Heart right ventricle (tissue), 16 donors: ENCODE measurements at regions of chrX and their contacts with region 1.

Region 1: GRCh38 chrX:104195489-104196084 is 29.3 kb downstream of the FAM199X start:
- DNase-seq: no peak
- ATAC-seq: no peak
- H3K4me3 ChIP-seq: no peak overlapping the region
- H3K27ac ChIP-seq: no peak overlapping the region
- H3K4me1 ChIP-seq: peaks cover 0 to 5% (median 0%) of the 10 kb centered on the region in 9 donors
- H3K27me3 ChIP-seq: peaks cover 0 to 39% (median 0%) of the 10 kb centered on the region in 7 donors
- CTCF ChIP-seq: peak; percentile 37 to 84 (median 68)

Region 2: DNA sequence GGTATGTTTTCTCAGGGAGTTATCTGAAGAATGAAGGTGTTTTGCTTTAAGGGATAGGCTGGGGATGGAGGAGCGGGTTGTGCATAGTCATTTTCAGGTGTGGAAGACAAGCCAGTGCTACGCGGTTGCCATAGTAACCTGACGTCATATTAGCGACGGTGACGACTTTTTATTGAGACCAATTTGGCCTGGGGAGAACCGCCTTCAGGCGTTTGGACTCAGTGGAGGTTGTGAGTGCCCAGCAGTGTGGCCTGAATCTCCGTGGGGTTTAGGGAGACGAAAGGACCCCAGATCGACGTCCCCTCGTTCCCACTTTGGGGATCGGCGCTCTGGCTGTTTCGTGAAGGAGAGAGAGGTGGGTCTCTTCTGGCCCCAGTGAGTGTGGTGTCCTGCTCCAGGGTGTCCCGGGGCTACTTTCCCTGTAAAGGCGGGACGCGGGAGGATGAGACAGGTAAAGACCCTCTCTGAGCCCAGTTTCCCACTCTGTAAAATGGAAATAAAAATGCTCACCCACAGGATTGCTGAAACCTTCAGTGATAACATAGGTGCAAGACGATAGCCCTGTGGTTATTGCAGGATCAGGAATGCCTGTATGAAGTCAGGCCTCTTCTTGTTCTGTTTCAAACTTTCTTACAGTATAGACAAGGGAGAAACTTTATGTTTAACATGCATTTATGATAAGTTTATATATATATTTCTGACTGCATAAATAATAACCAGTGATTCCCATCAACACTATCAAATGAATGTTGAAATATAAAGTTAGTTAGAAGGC is 1426.4 kb before region 1 on chrX:
- intact Hi-C with region 1: no loop called
- DNase-seq: peak; percentile 24 to 80
- ATAC-seq: peak; percentile 87 to 96 (median 92)
- H3K4me3 ChIP-seq: peak overlapping the region; percentile 39 to 72 (median 62)
- H3K27ac ChIP-seq: peak overlapping the region in 5 of 10 donors; percentile 23 to 77 (median 48)
- H3K4me1 ChIP-seq: peaks cover 0 to 13% (median 8%) of the 10 kb centered on the region in 9 donors
- H3K27me3 ChIP-seq: no peaks in the 10 kb centered on the region
- CTCF ChIP-seq: no peak

Region 3: GRCh38 chrX:104270920-104271512 is 75.4 kb after region 1 on chrX:
- intact Hi-C with region 1: loop called in 5 of 10 experiments (anchors 2 to 10 kb)
- DNase-seq: peak; percentile 23 to 39
- ATAC-seq: peak in 6 of 8 donors; percentile 46 to 89 (median 74)
- H3K4me3 ChIP-seq: peak overlapping the region in 7 of 10 donors; percentile 10 to 39 (median 27)
- H3K27ac ChIP-seq: no peak overlapping the region
- H3K4me1 ChIP-seq: peaks cover 0 to 5% (median 0%) of the 10 kb centered on the region in 9 donors
- H3K27me3 ChIP-seq: peaks cover 0 to 75% (median 0%) of the 10 kb centered on the region in 7 donors
- CTCF ChIP-seq: peak; percentile 6 to 69 (median 57)

Region 4: GRCh38 chrX:104285201-104285600 is 89.6 kb after region 1 on chrX:
- intact Hi-C with region 1: no loop called
- DNase-seq: no peak
- ATAC-seq: no peak
- H3K4me3 ChIP-seq: no peak overlapping the region
- H3K27ac ChIP-seq: no peak overlapping the region
- H3K4me1 ChIP-seq: no peaks in the 10 kb centered on the region
- H3K27me3 ChIP-seq: peaks cover 0 to 63% (median 0%) of the 10 kb centered on the region in 7 donors
- CTCF ChIP-seq: no peak

Region 5: GRCh38 chrX:104343428-104344129 is 148.0 kb after region 1 on chrX:
- intact Hi-C with region 1: loop called in 3 of 10 experiments (anchors 5 to 10 kb)
- DNase-seq: peak in 1 of 2 donors; percentile 15
- ATAC-seq: peak in 1 of 8 donors; percentile 33
- H3K4me3 ChIP-seq: no peak overlapping the region
- H3K27ac ChIP-seq: no peak overlapping the region
- H3K4me1 ChIP-seq: no peaks in the 10 kb centered on the region
- H3K27me3 ChIP-seq: peaks cover 0 to 59% (median 0%) of the 10 kb centered on the region in 7 donors
- CTCF ChIP-seq: peak in 8 of 9 donors; percentile 6 to 56 (median 43)